ENCODE measurements at regions of chr16 and their contacts with region 1.

Region 1: GRCh38 chr16:71894921-71895678 is at the start of gene IST1:
- DNase-seq: peak; percentile 98
- H3K4me3 ChIP-seq: peak within 1 kb of the TSS; percentile 84 to 98 (median 95)
- H3K27ac ChIP-seq: peak within 1 kb of the TSS; percentile 88
- H3K4me1 ChIP-seq: peaks cover 8% of the 10 kb centered on the region
- H3K27me3 ChIP-seq: no peaks in the 10 kb centered on the region
- CTCF ChIP-seq: no peak
- POLR2A ChIP-seq: peak; percentile 95
- total RNA-seq, gene IST1: 165 and 185 TPM in 2 replicates

Region 2: GRCh38 chr16:71808593-71809459 is 86.3 kb before region 1 on chr16 and contains the start of gene AP1G1:
- CTCF ChIA-PET with region 1: interaction called, 3 read pairs
- POLR2A ChIA-PET with region 1: no interaction called
- dilution Hi-C with region 1: no loop called
- intact Hi-C with region 1: loop called (anchors 1 kb)
- DNase-seq: peak; percentile 97
- H3K4me3 ChIP-seq: peak within 1 kb of the TSS; percentile 88 to 92 (median 92)
- H3K27ac ChIP-seq: peak within 1 kb of the TSS; percentile 94
- H3K4me1 ChIP-seq: peaks cover 18% of the 10 kb centered on the region
- H3K27me3 ChIP-seq: no peaks in the 10 kb centered on the region
- CTCF ChIP-seq: no peak
- POLR2A ChIP-seq: peak; percentile 87
- total RNA-seq, gene AP1G1: 85.3 and 88.4 TPM in 2 replicates

Region 3: DNA sequence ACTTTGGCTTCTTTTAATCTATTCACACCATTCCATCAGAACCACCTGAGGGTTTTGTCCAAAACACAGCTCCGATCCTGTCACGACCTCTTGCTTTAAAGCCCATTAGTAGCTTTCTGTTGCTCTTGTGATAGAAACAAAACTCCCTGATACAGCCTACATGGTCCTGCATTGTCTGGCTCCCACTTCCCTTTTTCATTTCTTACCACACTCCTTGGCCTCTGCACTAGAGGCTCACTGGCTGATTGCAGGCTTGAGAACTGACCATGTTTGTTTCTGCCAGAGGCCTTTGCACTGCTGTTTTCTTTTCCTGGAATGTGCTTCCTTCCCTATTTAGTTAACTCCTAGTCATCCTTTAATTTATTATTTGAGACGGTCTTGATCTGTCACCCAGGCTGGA is 23.9 kb after region 1 on chr16:
- CTCF ChIA-PET with region 1: interaction called, 6 read pairs
- POLR2A ChIA-PET with region 1: no interaction called
- dilution Hi-C with region 1: no loop called
- intact Hi-C with region 1: loop called (anchors 1 kb)
- DNase-seq: no peak
- H3K4me3 ChIP-seq: no peak overlapping the region
- H3K27ac ChIP-seq: no peak overlapping the region
- H3K4me1 ChIP-seq: peaks cover 31% of the 10 kb centered on the region
- H3K27me3 ChIP-seq: no peaks in the 10 kb centered on the region
- CTCF ChIP-seq: no peak
- POLR2A ChIP-seq: no peak

Region 4: GRCh38 chr16:71974068-71974818 is 79.1 kb after region 1 on chr16:
- CTCF ChIA-PET with region 1: no interaction called
- POLR2A ChIA-PET with region 1: no interaction called
- dilution Hi-C with region 1: no loop called
- intact Hi-C with region 1: no loop called
- DNase-seq: no peak
- H3K4me3 ChIP-seq: no peak overlapping the region
- H3K27ac ChIP-seq: no peak overlapping the region
- H3K4me1 ChIP-seq: no peaks in the 10 kb centered on the region
- H3K27me3 ChIP-seq: no peaks in the 10 kb centered on the region
- CTCF ChIP-seq: no peak
- POLR2A ChIP-seq: no peak

Region 5: DNA sequence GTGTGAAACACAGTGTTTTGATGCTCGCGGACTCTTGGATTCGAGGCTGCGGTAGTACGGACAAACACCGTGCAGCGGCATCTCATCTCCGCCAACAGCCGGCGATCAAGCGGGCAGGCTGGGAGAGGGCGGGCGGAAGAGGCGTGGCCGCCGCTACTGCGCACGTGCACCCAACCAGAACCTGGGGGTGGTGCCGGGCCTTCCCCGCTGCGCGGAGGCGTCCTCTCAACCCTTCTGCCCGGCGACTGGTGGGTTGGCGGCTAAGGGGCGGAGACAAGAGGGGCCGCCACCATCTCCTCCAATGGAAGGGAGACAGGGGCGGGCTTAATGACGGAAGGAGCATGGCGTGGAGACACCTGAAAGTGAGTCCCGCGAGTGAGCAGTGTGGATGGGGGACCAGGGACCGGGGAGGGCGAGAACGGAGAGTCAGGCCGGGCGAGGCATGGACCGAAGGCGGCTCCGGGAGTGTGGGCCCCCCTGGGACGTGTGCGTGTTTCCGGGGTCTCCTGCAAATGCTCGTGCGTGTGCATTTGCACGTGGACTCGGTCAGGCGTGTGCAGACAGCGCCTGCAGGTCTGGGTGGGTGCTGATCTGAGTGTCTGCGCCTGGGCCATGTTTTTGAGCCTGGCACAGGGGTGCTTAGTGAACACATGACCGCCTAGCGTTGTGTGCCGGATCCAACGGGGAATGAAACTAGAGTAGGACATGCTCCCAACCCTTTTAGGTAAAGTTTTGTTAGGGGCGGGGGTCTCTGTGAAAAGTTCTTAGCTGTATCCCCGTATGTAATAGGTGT is 113.5 kb after region 1 on chr16 and contains the start of gene DHODH:
- CTCF ChIA-PET with region 1: no interaction called
- POLR2A ChIA-PET with region 1: no interaction called
- dilution Hi-C with region 1: no loop called
- intact Hi-C with region 1: loop called (anchors 1 kb)
- DNase-seq: peak; percentile 99
- H3K4me3 ChIP-seq: peak within 1 kb of the TSS; percentile 22 to 73 (median 47)
- H3K27ac ChIP-seq: no peak within 1 kb of the TSS
- H3K4me1 ChIP-seq: peaks cover 2% of the 10 kb centered on the region
- H3K27me3 ChIP-seq: no peaks in the 10 kb centered on the region
- CTCF ChIP-seq: peak in 1 of 2 donors; percentile 1
- POLR2A ChIP-seq: peak; percentile 84
- total RNA-seq, gene DHODH: 9.2 and 9.7 TPM in 2 replicates